ENCODE measurements at regions of chr1 and their contacts with region 1.

Region 1: DNA sequence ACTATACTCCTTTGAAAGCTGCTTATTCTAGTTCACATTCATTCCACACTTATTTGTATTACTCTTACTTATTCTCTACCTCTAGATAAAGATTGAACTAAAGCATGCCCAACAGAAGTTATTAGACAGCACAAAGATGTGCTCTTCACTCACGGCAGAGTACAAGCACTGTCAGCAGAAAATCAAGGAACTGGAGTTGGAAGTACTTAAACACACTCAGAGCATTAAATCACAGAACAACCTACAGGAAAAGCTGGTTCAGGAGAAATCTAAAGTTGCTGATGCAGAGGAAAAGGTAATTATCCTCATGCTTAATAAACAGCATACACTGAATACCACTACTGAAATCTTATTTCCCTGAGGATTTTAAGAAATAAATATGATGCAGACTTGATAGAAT is 81.3 kb upstream of the PPIH start:
- DNase-seq: no peak
- H3K4me3 ChIP-seq: no peak overlapping the region
- H3K27ac ChIP-seq: no peak overlapping the region
- H3K4me1 ChIP-seq: no peaks in the 10 kb centered on the region
- H3K27me3 ChIP-seq: peaks cover 3 to 4% of the 10 kb centered on the region in 2 experiments
- CTCF ChIP-seq: no peak
- POLR2A ChIP-seq: no peak

Region 2: GRCh38 chr1:42335050-42335808 is 241.7 kb before region 1 on chr1 and contains the start of gene FOXJ3:
- CTCF ChIA-PET with region 1: interaction called, 3 read pairs
- POLR2A ChIA-PET with region 1: no interaction called
- dilution Hi-C with region 1: no loop called
- intact Hi-C with region 1: loop called (anchors 5 kb)
- DNase-seq: peak; percentile 91
- H3K4me3 ChIP-seq: peak within 1 kb of the TSS; percentile 79 to 88 (median 82)
- H3K27ac ChIP-seq: peak within 1 kb of the TSS; percentile 68
- H3K4me1 ChIP-seq: peaks cover 16% of the 10 kb centered on the region
- H3K27me3 ChIP-seq: no peaks in the 10 kb centered on the region
- CTCF ChIP-seq: no peak
- POLR2A ChIP-seq: peak; percentile 95
- total RNA-seq, gene FOXJ3: 36.5 and 38.8 TPM in 2 replicates

Region 3: DNA sequence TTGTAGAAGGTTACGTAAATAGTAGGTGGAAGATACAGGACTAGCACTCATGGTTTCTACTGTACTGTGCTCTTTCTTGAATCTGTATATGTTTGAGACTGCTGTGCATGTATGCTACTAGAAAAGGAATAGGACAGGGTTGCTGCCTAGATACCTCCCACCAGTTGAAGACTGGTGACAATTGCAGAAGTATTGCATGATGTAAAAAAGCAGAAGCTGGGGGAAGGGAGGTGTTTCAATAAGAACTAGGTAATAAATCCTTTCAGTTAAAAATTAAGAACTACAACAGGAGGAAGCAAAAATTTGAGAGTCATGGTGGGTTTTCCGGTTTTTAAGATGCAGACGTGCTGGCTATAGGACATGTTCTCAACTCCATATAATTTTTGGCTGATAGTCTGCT is 25.8 kb before region 1 on chr1:
- CTCF ChIA-PET with region 1: no interaction called
- POLR2A ChIA-PET with region 1: no interaction called
- dilution Hi-C with region 1: no loop called
- intact Hi-C with region 1: no loop called
- DNase-seq: no peak
- H3K4me3 ChIP-seq: no peak overlapping the region
- H3K27ac ChIP-seq: no peak overlapping the region
- H3K4me1 ChIP-seq: no peaks in the 10 kb centered on the region
- H3K27me3 ChIP-seq: peaks cover 4 to 11% of the 10 kb centered on the region in 2 experiments
- CTCF ChIP-seq: no peak
- POLR2A ChIP-seq: no peak

Region 4: GRCh38 chr1:42690477-42691156 is 113.7 kb after region 1 on chr1:
- CTCF ChIA-PET with region 1: interaction called, 17 read pairs
- POLR2A ChIA-PET with region 1: no interaction called
- dilution Hi-C with region 1: no loop called
- intact Hi-C with region 1: no loop called
- DNase-seq: peak; percentile 21
- H3K4me3 ChIP-seq: no peak overlapping the region
- H3K27ac ChIP-seq: no peak overlapping the region
- H3K4me1 ChIP-seq: peaks cover 11% of the 10 kb centered on the region
- H3K27me3 ChIP-seq: no peaks in the 10 kb centered on the region
- CTCF ChIP-seq: peak in 1 of 2 donors; percentile 5
- POLR2A ChIP-seq: no peak

Region 5: GRCh38 chr1:42737257-42737656 is 160.3 kb after region 1 on chr1:
- CTCF ChIA-PET with region 1: interaction called, 79 read pairs
- POLR2A ChIA-PET with region 1: no interaction called
- dilution Hi-C with region 1: no loop called
- intact Hi-C with region 1: no loop called
- DNase-seq: no peak
- H3K4me3 ChIP-seq: no peak overlapping the region
- H3K27ac ChIP-seq: no peak overlapping the region
- H3K4me1 ChIP-seq: no peaks in the 10 kb centered on the region
- H3K27me3 ChIP-seq: no peaks in the 10 kb centered on the region
- CTCF ChIP-seq: no peak
- POLR2A ChIP-seq: no peak

Region 6: GRCh38 chr1:42756956-42757891 is 180.3 kb after region 1 on chr1:
- CTCF ChIA-PET with region 1: interaction called, 43 read pairs
- POLR2A ChIA-PET with region 1: no interaction called
- dilution Hi-C with region 1: no loop called
- intact Hi-C with region 1: loop called (anchors 1 kb)
- DNase-seq: peak; percentile 55
- H3K4me3 ChIP-seq: no peak overlapping the region
- H3K27ac ChIP-seq: no peak overlapping the region
- H3K4me1 ChIP-seq: no peaks in the 10 kb centered on the region
- H3K27me3 ChIP-seq: no peaks in the 10 kb centered on the region
- CTCF ChIP-seq: peak; percentile 43 to 66
- POLR2A ChIP-seq: no peak

Region 7: GRCh38 chr1:42913426-42914091 is 336.6 kb after region 1 on chr1:
- CTCF ChIA-PET with region 1: interaction called, 14 read pairs
- POLR2A ChIA-PET with region 1: no interaction called
- dilution Hi-C with region 1: no loop called
- intact Hi-C with region 1: loop called (anchors 5 kb)
- DNase-seq: peak; percentile 85
- H3K4me3 ChIP-seq: no peak overlapping the region
- H3K27ac ChIP-seq: no peak overlapping the region
- H3K4me1 ChIP-seq: no peaks in the 10 kb centered on the region
- H3K27me3 ChIP-seq: peaks cover 4% of the 10 kb centered on the region in 2 experiments
- CTCF ChIP-seq: peak; percentile 62 to 75
- POLR2A ChIP-seq: no peak

Measured in endothelial cell of umbilical vein (primary cell).